HCT116 (cell line): ENCODE measurements at regions of chr7 and their contacts with region 1.

Region 1: GRCh38 chr7:33243319-33243881 is 114.0 kb downstream of the BBS9 start:
- DNase-seq: peak; percentile 26
- ATAC-seq: peak; percentile 85
- H3K4me3 ChIP-seq: no peak overlapping the region
- H3K27ac ChIP-seq: no peak overlapping the region
- H3K4me1 ChIP-seq: no peaks in the 10 kb centered on the region
- H3K27me3 ChIP-seq: no peaks in the 10 kb centered on the region
- CTCF ChIP-seq: peak; percentile 57 to 76 (median 66)
- POLR2A ChIP-seq: no peak
- RAD21 ChIP-seq: peak; percentile 75

Region 2: GRCh38 chr7:33807779-33808482 is 564.5 kb after region 1 on chr7:
- CTCF ChIA-PET with region 1: no interaction called
- POLR2A ChIA-PET with region 1: no interaction called
- RAD21 ChIA-PET with region 1: no interaction called
- intact Hi-C with region 1: loop called (anchors 5 kb)
- DNase-seq: peak; percentile 10
- ATAC-seq: peak; percentile 93
- H3K4me3 ChIP-seq: no peak overlapping the region
- H3K27ac ChIP-seq: no peak overlapping the region
- H3K4me1 ChIP-seq: 0 out of 4 replicates have a peak, but pooled peaks cover 0 to 5% of the 10 kb centered on the region in 2 experiments
- H3K27me3 ChIP-seq: peaks cover 4% of the 10 kb centered on the region; the same call in 1 of the 2 replicates
- CTCF ChIP-seq: peak; percentile 74 to 76 (median 74)
- POLR2A ChIP-seq: no peak
- RAD21 ChIP-seq: peak; percentile 57